Left ventricle myocardium inferior (tissue), 1 donor: ENCODE measurements at regions of chr4 and their contacts with region 1.

Region 1: GRCh38 chr4:154807042-154807630 is 26.1 kb downstream of the RBM46 start:
- DNase-seq: no peak
- H3K4me3 ChIP-seq: peak overlapping the region; percentile 7
- H3K27ac ChIP-seq: no peak overlapping the region
- H3K4me1 ChIP-seq: no peaks in the 10 kb centered on the region
- H3K27me3 ChIP-seq: no peaks in the 10 kb centered on the region
- CTCF ChIP-seq: peak; percentile 74

Region 2: DNA sequence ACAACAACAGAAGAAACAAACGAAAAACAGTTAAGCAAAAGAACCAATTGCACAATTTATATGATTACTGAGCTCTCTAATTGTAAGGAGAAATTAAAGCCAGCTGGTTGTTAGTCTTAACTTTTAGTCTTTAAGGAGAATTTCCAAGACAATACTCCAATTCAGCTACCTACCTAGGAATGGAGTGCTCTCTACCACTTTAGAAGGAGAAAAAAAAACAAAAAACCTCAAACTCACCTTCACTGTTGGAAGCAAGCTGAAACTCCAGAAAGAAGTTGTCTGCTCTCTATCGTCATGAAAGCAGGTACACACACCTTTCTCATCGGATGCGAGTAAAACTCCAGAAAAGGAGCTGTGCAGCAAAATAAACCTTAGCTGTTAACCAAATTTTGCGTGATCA is 315.2 kb after region 1 on chr4:
- intact Hi-C with region 1: no loop called
- DNase-seq: no peak
- H3K4me3 ChIP-seq: no peak overlapping the region
- H3K27ac ChIP-seq: no peak overlapping the region
- H3K4me1 ChIP-seq: no peaks in the 10 kb centered on the region
- H3K27me3 ChIP-seq: no peaks in the 10 kb centered on the region
- CTCF ChIP-seq: no peak

Region 3: DNA sequence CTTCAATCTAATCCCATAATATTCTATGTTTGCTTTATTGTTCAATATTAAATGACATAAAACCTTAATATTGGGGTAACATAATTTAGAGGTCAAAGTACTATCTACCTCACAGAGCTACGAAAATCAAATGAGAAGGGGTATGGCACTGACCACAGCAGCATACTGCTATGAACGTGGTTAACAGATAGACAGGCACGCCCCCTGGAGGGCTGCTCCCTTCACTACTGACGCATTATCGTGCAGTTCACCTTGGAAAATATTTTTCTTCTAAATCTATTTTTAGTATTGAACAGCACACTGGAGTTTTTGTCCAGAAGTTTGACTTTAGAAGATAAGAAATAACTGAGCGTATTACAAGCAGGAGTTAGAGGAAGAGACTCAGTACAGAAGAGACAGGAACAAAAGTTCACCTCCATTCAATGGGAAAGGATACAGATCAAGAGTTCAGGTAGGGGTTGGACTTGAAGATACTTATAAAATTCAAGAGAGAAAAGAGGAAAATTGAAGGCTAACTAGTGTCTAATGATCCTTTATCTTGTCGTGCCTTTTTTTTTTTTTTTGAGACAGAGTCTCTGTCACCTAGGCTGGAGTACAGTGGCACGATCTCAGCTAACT is 546.9 kb after region 1 on chr4:
- intact Hi-C with region 1: loop called (anchors 10 kb)
- DNase-seq: peak; percentile 70
- H3K4me3 ChIP-seq: no peak overlapping the region
- H3K27ac ChIP-seq: no peak overlapping the region
- H3K4me1 ChIP-seq: peaks cover 5% of the 10 kb centered on the region
- H3K27me3 ChIP-seq: no peaks in the 10 kb centered on the region
- CTCF ChIP-seq: peak; percentile 81

Region 4: GRCh38 chr4:155371432-155372043 is 564.4 kb after region 1 on chr4:
- intact Hi-C with region 1: loop called (anchors 5 kb)
- DNase-seq: no peak
- H3K4me3 ChIP-seq: no peak overlapping the region
- H3K27ac ChIP-seq: no peak overlapping the region
- H3K4me1 ChIP-seq: peaks cover 12% of the 10 kb centered on the region
- H3K27me3 ChIP-seq: peaks cover 19% of the 10 kb centered on the region
- CTCF ChIP-seq: peak; percentile 61